AG04449 (cell line): ENCODE measurements at regions of chr7 and their contacts with region 1.

Region 1: DNA sequence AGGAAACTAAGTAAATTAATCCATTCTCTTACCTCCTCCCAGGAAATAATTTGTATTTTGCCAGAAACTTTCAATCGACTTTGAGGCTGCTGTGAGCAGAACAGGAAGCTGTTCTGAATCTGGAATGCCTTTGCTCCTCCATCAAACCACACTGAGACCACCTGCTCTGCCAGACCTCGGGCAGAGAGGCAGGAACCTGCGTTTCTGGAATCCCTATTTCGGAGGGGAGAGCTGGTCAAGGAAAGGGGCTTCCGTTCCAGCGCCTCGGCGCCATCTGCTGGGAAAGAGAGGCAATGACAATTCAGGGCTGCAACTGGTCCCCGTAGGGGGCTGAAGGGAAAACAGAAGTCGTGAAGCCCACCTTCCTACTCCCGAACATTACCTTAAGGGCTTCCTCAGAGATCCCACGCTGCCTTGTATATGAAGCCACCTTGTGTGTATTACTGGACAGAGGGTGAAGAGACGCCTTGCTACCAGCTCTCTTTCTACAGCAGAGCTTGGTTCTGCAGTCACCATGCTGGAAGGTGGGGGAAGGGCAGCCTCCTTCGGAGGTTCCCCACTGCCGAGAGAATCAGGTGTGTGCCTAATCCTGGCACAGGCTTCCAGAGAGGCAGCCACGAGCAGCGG is 31.2 kb downstream of the ZNF467 start:
- DNase-seq: no peak
- H3K4me3 ChIP-seq: peak overlapping the region; percentile 45
- CTCF ChIP-seq: peak; percentile 92

Region 2: GRCh38 chr7:149662591-149663095 is 79.5 kb before region 1 on chr7:
- CTCF ChIA-PET with region 1: interaction called, 101 read pairs
- POLR2A ChIA-PET with region 1: no interaction called
- DNase-seq: no peak
- H3K4me3 ChIP-seq: no peak overlapping the region
- CTCF ChIP-seq: peak; percentile 55

Region 3: DNA sequence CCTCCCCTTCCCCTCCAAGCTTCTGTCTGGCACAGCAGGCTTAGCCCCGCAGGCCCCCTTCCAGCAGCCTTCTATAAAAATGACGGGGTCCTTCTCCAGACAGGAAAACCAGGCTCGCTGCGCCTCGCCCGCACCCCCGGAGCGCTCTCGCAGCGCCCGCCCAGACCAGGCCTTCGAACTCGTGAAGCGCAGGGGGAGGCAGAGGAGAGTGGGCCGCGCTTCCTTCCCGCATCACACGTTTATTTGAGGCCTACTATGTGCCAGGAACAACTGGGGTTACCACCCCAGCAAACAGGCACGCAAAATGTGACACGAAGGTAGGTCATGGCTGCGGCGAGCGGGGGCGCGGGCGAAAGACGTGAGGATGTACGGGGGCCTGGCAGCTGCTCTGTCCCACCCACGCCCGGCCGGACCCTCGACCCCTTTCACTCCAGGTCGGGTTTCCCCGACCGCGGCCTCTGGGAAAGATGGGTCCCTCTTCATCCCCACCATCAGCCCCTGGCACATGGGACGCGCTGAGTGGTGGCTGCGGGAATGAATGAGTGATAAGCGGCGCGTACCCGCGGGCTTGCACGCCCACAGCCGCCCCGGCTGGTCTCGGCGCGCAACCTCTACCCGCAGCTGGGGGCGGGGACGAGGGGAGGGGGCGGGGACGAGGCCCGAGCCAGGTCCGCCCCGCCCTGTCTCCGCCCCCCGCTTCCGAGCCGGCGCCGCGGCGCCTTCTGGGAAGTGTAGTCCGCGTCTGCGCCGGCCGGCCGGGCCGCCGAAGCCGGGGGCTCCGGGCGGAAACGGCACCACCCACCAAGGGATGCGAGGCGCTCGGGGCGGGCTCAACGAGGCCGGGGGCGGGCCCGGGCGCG is 27.9 kb before region 1 on chr7:
- CTCF ChIA-PET with region 1: interaction called, 10 read pairs
- POLR2A ChIA-PET with region 1: no interaction called
- DNase-seq: no peak
- H3K4me3 ChIP-seq: peak overlapping the region; percentile 75
- CTCF ChIP-seq: no peak

Region 4: DNA sequence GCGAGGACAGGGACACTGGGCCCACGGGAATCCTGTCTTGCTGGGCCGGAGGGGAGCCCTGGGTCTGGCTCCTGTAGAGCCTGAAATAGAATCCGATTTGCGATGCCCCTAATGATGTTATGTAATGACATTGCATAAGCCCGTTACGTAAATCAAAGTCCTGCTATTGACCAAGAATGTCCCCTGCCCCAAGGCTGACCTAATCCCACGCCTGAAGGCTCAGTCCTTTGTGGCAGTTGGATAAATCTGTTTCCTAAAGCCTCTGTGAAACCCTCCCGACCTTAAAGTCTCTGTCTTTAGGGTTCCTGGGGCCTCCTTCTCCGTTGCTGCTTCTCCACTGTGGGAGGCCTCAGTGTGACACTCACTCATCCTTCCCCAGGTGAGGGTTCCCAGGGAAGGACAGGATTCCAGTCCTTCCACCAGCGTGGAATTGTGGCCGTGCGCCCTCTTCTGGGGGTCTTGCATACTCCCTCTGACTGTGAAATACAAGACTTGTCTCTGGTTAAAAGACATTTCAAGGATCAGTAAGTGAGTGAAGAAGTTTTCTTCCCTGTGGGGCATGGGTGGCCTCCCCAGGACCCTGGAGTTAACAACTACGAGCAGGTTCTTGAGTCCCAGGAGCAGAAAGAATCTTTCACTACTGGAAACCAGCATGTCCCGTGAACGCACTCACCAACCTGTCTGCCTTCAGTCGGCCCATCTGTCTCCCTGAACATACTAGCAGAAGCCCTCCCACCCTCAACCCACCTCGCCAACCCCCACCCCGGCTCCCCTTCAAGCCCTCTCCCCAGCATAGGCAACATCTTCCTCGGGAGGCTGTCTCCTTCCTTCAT is 11.4 kb after region 1 on chr7:
- CTCF ChIA-PET with region 1: interaction called, 31 read pairs
- POLR2A ChIA-PET with region 1: no interaction called
- DNase-seq: no peak
- H3K4me3 ChIP-seq: no peak overlapping the region
- CTCF ChIP-seq: peak; percentile 53

Region 5: GRCh38 chr7:149872419-149873073 is 130.4 kb after region 1 on chr7:
- CTCF ChIA-PET with region 1: no interaction called
- POLR2A ChIA-PET with region 1: no interaction called
- DNase-seq: peak; percentile 40
- H3K4me3 ChIP-seq: peak overlapping the region; percentile 78
- CTCF ChIP-seq: peak; percentile 36